Activated CD4-positive, alpha-beta T cell treated with anti-CD3 and anti-CD28 coated beads, Interleukin-2, amount 10 ng/mL, durations not matched to agents 24 days and 14 days (primary cell): ENCODE measurements at regions of chr1 and their contacts with region 1.

Region 1: DNA sequence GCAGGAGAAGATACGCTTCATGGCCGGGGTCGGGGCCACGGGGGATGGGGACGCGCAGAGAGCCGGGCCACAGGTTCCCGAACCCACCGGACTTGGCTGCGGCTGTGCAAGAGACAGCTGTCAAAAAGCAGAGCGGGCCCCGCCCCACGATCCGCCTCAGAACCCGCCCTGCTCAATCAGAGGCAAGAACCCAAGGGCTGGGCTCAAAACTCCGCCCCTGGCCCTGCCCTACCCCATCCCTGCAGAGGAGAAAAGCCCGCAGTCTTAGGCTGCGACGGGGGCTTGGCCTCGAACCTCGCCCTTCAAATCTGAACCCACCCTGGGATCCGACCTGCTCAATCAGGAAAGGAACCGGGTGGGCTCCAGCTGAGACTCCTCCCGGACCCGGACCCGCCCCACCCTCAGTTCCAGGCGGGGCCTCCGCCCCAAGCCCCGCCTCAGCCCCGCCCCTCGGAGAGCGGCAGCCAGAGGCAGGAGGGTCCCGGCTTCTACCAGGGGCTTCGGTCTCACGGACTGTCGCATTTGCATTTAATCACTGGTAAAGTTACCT is at the start of gene ANKRD35:
- DNase-seq: peak; percentile 97
- H3K4me3 Mint-ChIP-seq: peak within 1 kb of the TSS; percentile 87
- H3K27ac Mint-ChIP-seq: no peak within 1 kb of the TSS
- H3K4me1 Mint-ChIP-seq: peaks cover 18% of the 10 kb centered on the region
- H3K27me3 Mint-ChIP-seq: peaks cover 35% of the 10 kb centered on the region
- total RNA-seq, gene ANKRD35: 0.40 TPM in 2 replicates

Region 2: GRCh38 chr1:145871994-145872924 is 13.6 kb before region 1 on chr1:
- intact Hi-C with region 1: loop called (anchors 1 kb)
- DNase-seq: peak; percentile 83
- H3K4me3 Mint-ChIP-seq: peak overlapping the region; percentile 87
- H3K27ac Mint-ChIP-seq: peak overlapping the region; percentile 80
- H3K4me1 Mint-ChIP-seq: peaks cover 14% of the 10 kb centered on the region
- H3K27me3 Mint-ChIP-seq: peaks cover 41% of the 10 kb centered on the region

Region 3: DNA sequence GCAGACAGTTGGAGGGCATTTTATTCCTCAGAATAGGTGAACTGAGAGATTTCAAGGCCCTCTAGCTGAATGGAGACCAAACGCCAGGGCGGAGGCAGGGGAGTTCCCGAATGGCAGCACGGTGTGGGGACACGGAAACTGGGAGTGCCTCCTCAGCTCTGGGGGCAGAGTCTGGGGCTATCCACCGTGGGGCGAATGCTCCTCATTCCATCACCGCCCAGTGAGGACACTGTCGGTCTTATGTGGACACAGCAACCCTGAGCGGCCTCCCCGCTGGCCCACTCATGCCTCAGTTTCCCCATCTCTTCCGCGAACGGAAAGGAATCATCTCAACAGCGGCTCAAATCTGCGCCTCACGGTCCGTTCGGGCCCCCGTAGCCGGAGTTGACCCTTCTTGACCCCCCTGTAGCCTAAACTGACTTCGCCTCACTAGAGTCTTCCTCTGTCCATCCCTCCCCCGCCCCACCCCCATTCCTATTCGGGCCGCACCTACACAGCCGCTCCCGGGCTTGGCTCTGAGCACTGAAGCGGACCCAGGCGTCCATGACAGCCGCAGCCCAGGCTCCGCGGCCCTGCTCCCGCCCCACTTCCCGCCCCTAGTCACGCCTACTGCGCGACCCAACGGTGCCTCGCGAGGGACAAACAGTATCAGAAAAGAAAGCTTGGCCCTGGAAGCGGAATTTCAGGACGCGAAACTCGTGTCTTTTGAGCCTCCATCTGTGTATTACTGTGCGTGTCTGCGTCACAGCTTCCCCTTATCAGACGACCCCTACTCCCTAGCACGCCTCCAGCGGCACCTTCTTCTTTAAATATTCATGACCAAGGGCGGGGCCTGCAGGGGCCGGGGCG is 32.6 kb after region 1 on chr1 and contains the start of gene PEX11B:
- intact Hi-C with region 1: loop called (anchors 2 kb)
- DNase-seq: peak; percentile 97
- H3K4me3 Mint-ChIP-seq: peak within 1 kb of the TSS; percentile 94
- H3K27ac Mint-ChIP-seq: peak within 1 kb of the TSS; percentile 94
- H3K4me1 Mint-ChIP-seq: peaks cover 36% of the 10 kb centered on the region
- H3K27me3 Mint-ChIP-seq: no peaks in the 10 kb centered on the region
- total RNA-seq, gene PEX11B: 31.7 and 32.2 TPM in 2 replicates